ENCODE measurements at regions of chr12 and their contacts with region 1.

Region 1: DNA sequence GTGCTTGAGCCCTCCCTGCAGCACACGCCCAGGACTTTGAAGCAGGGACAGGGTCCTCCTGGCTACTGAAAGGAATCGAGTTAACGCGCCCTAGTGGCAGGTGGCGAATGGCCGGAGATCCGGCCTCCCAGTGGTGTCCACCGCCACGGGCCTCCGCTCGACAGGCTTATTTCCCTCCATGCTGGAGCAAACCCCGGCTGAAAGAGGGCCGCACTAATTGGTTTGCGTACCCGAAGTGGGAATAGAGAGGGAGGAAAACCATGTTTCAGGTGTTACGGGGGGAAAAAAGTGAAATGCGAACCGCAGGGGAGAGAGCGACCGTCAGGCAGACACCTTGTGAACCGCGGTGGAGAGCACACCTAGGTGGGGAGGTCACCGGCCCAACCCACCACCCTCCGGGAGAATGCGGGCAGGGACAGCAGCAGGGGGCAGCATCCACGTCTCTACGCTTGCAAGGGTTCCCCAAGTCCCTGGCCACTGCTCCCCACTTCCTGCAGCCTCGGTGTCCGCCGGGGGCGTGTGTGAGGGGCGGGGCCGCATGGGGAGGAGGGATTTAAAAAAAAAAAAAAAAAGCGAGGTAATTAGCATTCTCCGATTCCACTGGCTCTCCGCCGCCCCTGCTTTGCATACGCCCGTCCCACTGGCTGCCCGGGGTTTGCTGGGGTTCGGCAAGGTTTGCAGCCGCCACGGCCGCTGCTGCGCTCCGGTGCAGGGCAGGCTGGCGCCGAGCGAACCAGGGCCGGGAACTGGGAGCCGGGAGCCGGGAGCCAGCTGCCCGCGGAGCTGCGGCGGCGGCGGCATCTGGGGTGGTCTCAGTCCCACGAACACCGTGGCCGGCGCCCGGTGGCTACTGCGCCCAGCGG is 224.6 kb upstream of the CRY1 start:
- DNase-seq: peak; percentile 93
- ATAC-seq: peak; percentile 66
- H3K4me3 Mint-ChIP-seq: peak overlapping the region; percentile 86
- H3K27ac Mint-ChIP-seq: no peak overlapping the region
- H3K4me1 Mint-ChIP-seq: peaks cover 27% of the 10 kb centered on the region
- H3K27me3 Mint-ChIP-seq: peaks cover 2% of the 10 kb centered on the region

Region 2: GRCh38 chr12:107131832-107132616 is 186.0 kb before region 1 on chr12:
- CTCF ChIA-PET with region 1: interaction called, 7 read pairs
- POLR2A ChIA-PET with region 1: no interaction called
- intact Hi-C with region 1: loop called (anchors 5 kb)
- DNase-seq: peak; percentile 10
- ATAC-seq: peak; percentile 36
- H3K4me3 Mint-ChIP-seq: no peak overlapping the region
- H3K27ac Mint-ChIP-seq: no peak overlapping the region
- H3K4me1 Mint-ChIP-seq: no peaks in the 10 kb centered on the region
- H3K27me3 Mint-ChIP-seq: no peaks in the 10 kb centered on the region

Region 3: DNA sequence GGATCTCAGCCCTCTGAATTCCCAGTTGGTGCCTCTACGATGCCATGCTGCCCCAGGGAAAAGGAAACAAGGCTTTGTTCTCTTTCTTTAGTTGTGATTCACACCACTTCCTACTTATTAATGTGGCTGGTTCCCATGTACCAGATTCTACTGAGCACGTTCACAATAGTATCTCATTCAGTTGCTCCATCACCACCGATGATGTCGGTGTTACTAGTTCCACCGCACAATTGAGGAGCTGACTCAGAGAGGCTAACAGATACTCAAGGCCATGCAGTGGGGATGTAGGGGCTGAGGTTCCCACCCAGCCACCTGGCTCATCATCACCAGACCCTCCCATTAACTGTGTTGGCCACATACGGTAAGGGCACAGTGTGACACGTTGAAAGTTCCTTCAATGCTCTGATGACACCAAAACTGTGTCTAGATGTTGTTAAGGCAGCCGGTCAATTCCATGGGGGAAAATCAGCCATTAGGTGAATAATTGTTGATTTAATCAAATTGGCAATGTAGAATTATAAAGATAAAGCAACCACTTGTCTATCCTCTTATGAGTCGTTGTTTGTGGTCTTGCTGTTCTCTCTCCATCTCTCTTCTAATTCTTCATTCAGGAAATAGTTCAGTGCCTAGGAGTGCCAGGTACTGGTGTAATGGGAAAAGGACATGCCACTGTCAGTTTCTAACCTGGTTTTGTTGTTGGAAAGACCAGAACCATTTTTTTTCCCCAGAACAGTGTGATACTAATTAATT is 19.5 kb after region 1 on chr12:
- CTCF ChIA-PET with region 1: interaction called, 10 read pairs
- POLR2A ChIA-PET with region 1: no interaction called
- intact Hi-C with region 1: no loop called
- DNase-seq: peak; percentile 62
- ATAC-seq: peak; percentile 94
- H3K4me3 Mint-ChIP-seq: no peak overlapping the region
- H3K27ac Mint-ChIP-seq: peak overlapping the region; percentile 18
- H3K4me1 Mint-ChIP-seq: peaks cover 49% of the 10 kb centered on the region
- H3K27me3 Mint-ChIP-seq: no peaks in the 10 kb centered on the region

Region 4: DNA sequence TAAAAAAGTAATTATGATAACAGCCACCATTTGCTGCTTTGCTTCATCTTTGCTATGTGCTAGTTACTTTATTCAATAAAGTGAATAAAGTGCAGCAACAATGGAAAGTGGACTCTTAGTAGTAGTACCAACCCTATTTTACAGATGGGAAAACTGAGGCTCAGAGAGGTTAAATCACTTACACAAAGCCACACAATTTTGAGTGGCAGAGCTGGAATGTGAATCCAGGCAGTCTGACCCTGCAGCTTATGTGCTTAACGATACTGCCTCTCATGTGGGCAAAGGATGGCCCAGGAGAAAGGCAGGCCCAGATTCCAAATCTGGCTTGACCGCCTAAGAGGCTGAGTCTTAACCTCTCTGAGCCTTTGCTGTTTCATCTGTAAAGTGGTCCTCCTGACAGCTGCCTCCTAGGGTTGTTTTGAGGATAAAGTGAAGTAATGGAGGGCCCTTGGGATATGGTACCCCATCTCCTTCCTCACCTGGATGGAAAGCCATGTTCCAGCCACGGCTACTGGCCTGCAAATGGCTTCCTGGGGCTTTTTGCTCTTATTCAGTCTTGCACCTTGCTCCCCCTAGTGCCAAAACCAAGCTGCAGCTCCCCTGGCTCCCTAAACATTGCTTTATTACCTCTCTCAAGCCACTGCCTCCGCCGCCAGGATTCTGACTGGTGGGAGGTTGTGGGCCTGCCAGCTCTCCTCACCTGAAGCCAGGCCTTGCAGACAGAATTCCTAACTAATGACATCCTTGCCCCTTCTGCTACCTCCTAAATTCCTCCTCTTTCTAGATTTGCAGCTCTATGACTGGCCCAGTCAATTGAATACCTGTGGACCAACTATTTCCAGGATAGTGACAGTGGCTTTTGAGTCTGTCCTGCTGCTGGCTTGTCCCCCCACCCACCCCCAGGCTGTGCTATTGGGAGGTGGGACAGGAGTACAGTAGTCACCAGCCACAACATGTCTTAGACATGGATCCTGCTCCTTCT is 84.3 kb after region 1 on chr12:
- CTCF ChIA-PET with region 1: interaction called, 9 read pairs
- POLR2A ChIA-PET with region 1: no interaction called
- intact Hi-C with region 1: loop called (anchors 1 to 2 kb)
- DNase-seq: peak; percentile 80
- ATAC-seq: peak; percentile 88
- H3K4me3 Mint-ChIP-seq: no peak overlapping the region
- H3K27ac Mint-ChIP-seq: no peak overlapping the region
- H3K4me1 Mint-ChIP-seq: peaks cover 12% of the 10 kb centered on the region
- H3K27me3 Mint-ChIP-seq: no peaks in the 10 kb centered on the region

Region 5: DNA sequence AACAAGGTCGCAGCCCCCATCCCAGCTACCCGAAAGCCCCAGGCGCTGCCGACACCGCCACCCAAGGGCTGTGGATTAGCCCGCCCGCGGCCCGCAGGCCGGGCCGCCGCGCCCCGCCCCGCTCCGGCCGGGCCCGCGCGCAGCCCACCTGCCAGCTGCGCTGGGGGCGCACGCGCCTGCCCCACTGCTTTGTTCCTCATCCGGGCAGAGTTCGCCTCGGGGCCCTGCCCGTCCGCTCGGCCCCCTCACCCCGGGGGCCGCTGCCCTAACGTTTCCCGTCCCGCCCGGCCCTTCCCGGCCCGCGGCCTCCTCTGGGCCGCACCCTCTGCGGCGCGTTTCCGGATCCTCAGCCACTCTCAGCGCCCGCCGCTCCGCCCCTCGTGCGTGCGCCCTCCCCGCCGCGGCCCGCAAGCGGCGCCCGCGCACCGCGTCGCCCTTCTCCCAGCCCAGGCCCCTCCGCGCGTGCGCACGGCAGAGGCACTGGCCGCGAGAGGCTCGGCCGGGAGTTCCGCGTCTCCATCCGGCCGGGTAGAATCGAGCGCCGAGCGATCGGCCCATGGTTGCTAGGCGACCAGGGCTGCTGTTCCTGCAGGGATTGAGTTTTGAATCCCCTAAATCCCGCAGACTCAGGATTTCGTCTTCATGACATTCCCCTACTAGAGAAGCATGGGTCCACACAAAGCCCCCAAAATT is 443.0 kb after region 1 on chr12 and contains the start of gene PRDM4:
- CTCF ChIA-PET with region 1: no interaction called
- POLR2A ChIA-PET with region 1: no interaction called
- intact Hi-C with region 1: loop called in 1 of 2 experiments (anchors 2 kb)
- DNase-seq: peak; percentile 95
- ATAC-seq: peak; percentile 93
- H3K4me3 Mint-ChIP-seq: peak within 1 kb of the TSS; percentile 92
- H3K27ac Mint-ChIP-seq: peak within 1 kb of the TSS; percentile 91
- H3K4me1 Mint-ChIP-seq: peaks cover 27% of the 10 kb centered on the region
- H3K27me3 Mint-ChIP-seq: no peaks in the 10 kb centered on the region
- total RNA-seq, gene PRDM4: 27.5 to 29.7 TPM